ENCODE measurements at regions of chr3 and their contacts with region 1.

Region 1: GRCh38 chr3:108221911-108222852 is at the start of gene IFT57:
- DNase-seq: peak; percentile 98
- H3K4me3 ChIP-seq: peak within 1 kb of the TSS; percentile 92
- H3K27ac ChIP-seq: peak within 1 kb of the TSS; percentile 75
- H3K4me1 ChIP-seq: peaks cover 42% of the 10 kb centered on the region
- CTCF ChIP-seq: no peak
- total RNA-seq, gene IFT57: 61.9 and 68.2 TPM in 2 replicates

Region 2: DNA sequence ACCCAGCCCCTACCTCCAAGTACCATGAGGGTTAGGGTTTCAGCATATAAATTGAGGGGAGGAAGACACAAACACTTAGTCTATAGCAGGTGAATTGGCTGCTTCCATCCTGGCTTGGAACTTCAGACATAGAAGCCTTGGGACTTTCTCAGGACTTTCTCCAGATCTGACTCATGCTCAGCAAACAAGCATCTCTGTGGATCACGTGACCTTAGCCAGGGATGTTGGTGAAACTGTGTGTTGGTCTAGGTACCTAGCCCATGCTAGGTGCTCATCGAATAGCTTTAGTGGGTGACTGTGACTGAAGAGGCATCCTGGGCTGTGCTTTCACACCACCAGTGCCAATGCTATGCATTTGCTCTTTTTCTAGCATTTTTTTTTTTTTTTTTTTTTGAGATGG is 190.3 kb before region 1 on chr3:
- CTCF ChIA-PET with region 1: no interaction called
- POLR2A ChIA-PET with region 1: no interaction called
- intact Hi-C with region 1: no loop called
- DNase-seq: no peak
- H3K4me3 ChIP-seq: no peak overlapping the region
- H3K27ac ChIP-seq: no peak overlapping the region
- H3K4me1 ChIP-seq: peaks cover 4% of the 10 kb centered on the region
- CTCF ChIP-seq: no peak

Region 3: DNA sequence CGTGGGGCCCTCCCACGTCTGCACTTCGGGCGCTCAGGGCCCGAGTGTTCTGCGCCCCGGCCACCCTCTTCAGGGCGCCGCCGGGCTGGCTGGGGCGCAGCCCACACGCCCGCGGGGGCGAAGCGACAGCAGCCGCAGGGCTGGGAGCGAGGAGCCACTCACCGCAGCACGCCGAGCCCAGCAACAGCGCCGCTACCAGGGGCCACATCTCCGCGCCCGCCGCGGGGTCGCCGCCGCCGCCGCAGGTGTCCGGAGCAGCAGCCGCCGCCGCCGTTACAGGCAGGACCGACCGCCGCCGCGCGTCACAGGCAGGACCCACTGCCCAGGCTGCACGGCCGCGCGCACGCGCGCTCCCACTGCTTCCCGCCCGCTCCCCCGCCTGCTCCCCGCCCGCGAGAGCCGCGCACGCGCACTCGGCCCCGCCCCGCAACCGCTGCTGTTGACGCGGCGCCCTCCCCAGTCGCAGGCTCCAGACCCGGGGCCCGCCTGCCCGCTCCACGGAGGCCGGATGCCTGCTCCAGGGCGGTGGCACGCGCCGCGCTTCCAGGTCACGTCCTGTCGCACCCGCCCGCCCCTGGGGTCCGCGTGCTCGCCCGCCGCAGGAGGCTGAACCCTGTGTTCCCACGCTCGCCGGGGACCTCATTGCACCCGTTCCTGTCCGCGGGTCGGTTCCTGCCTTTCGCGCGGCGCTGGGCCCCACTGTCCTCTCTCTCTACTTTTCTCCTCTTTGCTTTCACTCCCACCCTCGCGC is 131.3 kb before region 1 on chr3 and contains the start of gene CD47:
- CTCF ChIA-PET with region 1: no interaction called
- POLR2A ChIA-PET with region 1: interaction called, 11 read pairs
- intact Hi-C with region 1: loop called (anchors 1 kb)
- DNase-seq: peak; percentile 90
- H3K4me3 ChIP-seq: peak within 1 kb of the TSS; percentile 98
- H3K27ac ChIP-seq: peak within 1 kb of the TSS; percentile 78
- H3K4me1 ChIP-seq: peaks cover 35% of the 10 kb centered on the region
- CTCF ChIP-seq: 0 out of 2 replicates have a peak, but pooled peaks have one; percentile 5
- total RNA-seq, gene CD47: 40.8 and 43.9 TPM in 2 replicates